Posterior cingulate gyrus (tissue), 11 donors: ENCODE measurements at regions of chr12 and their contacts with region 1.

Region 1: DNA sequence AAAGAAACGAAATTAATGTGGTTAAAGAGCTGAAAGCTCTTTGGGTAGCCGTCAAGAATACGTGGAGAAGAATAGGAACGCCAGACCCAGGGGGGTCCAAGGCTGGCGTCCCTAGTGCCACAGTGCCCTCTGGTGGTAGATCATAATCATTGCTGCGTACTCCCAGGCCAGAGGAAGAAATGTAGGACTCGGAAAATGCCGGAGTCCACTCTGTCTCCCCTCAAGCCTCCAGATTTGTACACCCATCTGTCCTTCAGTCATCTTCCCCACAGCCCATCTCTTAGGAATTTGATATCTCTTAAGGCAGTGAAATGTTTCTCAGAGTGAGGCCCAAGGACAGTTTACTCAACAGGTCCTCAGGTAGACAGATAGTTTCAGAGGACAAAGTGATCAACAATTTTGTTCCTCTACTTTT is 25.4 kb upstream of the PLEKHG6 start:
- DNase-seq: peak in 8 of 10 donors; percentile 22 to 92 (median 64)

Region 2: DNA sequence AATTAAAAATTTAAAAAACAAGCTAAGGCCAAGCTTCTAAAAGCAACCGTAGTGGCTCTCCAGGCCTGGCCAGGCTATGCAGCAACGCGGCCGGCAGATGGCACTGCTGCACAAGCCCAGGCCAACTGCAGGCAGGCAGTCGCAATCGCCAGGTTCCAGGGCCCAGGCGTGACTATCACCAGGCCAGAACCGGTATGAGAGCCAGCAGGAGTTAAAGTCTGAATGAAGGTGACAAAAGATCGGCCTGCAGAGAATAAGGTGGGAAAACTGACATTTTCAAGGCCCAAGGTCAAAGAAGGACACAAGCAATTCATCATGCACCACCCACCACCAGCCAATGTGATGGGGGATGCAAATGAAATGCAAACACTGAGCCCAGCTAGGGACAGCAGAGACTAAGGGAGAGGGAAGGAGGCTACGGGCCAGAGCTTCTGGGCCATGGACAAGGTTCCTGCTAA is 296.4 kb before region 1 on chr12:
- intact Hi-C with region 1: loop called (anchors 1 kb)
- DNase-seq: peak; percentile 65 to 97 (median 82)

Region 3: DNA sequence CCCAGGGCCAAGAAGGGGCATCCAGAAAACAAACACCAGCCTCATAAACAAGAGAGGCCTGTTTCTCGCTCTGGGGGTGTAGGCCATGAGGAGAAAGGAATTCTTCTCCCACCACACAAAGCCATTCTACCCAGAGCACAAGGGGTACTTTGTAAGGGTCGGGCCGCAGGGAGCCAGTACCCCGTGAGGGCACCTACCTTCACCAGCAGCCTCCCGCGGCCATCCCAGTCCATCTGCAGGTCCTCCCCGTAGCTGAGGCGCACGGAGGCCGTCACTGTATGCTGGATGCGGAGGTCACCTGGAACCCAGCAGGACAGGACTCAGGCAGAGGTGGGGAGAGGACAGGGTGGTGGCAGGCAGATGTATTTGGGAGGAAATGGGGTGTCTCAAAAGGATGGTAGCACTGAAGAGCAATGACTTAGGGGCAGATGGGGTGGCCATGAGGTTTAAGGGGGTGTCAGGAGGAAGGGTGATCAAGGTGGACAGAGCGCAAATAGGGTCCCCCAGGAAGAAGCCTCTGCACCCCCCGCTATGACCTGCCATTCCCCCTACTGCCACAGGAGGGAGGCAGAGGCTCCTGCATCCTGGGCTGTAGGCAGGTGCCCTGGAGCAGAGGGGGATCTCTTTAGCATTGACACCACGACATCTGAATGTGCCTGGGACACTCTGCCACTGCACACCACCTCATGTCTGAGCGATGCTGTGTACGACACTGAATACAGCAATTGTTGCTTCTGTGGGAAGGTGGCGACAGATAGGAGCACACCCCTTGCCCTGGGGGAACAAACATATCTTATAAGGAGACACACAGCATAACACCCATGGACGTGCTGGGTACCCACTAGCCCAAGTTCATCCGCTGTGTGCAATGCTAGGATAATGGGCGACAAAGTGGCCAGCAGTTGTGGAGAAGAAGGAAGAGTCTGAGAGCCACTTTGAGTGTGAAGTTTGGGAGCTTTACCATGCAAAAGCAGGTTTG is 222.0 kb before region 1 on chr12:
- intact Hi-C with region 1: loop called (anchors 2 kb)
- DNase-seq: peak in 9 of 10 donors; percentile 29 to 94 (median 68)

Region 4: GRCh38 chr12:6430124-6430989 is 145.3 kb after region 1 on chr12:
- intact Hi-C with region 1: no loop called
- DNase-seq: peak in 8 of 10 donors; percentile 27 to 85 (median 44)